ENCODE measurements at regions of chr11 and their contacts with region 1.

Region 1: DNA sequence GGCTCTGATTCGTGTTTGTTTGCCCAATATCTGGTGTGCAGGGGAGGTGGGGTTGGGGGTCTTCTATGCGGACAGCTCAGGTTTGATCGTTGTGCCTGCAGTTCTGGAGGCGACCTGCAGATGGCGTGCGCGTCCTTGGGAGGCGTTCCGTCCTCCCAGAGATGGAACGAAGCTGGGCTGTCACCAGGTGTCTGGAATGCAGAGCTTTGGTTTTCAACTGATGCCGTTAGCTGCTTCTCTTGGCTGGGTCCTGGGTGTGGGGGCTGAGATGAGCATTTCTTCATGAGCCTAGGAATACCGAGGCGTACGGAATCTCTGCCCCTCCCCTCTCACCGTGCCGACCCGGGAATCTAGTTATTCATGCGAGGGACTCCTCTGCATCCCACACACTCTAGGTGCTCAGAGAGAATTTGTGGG is 98.6 kb downstream of the CEP164 start:
- DNase-seq: no peak
- ATAC-seq: peak; percentile 83
- H3K4me3 ChIP-seq: no peak overlapping the region
- H3K27ac ChIP-seq: no peak overlapping the region
- H3K4me1 ChIP-seq: no peaks in the 10 kb centered on the region
- H3K27me3 ChIP-seq: no peaks in the 10 kb centered on the region
- CTCF ChIP-seq: peak; percentile 96 to 100 (median 98)
- EP300 ChIP-seq: no peak
- POLR2A ChIP-seq: no peak
- RAD21 ChIP-seq: peak; percentile 95

Region 2: GRCh38 chr11:117369534-117369933 is 56.7 kb before region 1 on chr11:
- CTCF ChIA-PET with region 1: no interaction called
- POLR2A ChIA-PET with region 1: no interaction called
- RAD21 ChIA-PET with region 1: no interaction called
- SMC1A ChIA-PET with region 1: no interaction called
- in situ Hi-C with region 1: no loop called
- intact Hi-C with region 1: no loop called
- DNase-seq: no peak
- ATAC-seq: no peak
- H3K4me3 ChIP-seq: no peak overlapping the region
- H3K27ac ChIP-seq: no peak overlapping the region
- H3K4me1 ChIP-seq: no peaks in the 10 kb centered on the region
- H3K27me3 ChIP-seq: no peaks in the 10 kb centered on the region
- CTCF ChIP-seq: no peak
- EP300 ChIP-seq: no peak
- POLR2A ChIP-seq: no peak
- RAD21 ChIP-seq: no peak

Region 3: DNA sequence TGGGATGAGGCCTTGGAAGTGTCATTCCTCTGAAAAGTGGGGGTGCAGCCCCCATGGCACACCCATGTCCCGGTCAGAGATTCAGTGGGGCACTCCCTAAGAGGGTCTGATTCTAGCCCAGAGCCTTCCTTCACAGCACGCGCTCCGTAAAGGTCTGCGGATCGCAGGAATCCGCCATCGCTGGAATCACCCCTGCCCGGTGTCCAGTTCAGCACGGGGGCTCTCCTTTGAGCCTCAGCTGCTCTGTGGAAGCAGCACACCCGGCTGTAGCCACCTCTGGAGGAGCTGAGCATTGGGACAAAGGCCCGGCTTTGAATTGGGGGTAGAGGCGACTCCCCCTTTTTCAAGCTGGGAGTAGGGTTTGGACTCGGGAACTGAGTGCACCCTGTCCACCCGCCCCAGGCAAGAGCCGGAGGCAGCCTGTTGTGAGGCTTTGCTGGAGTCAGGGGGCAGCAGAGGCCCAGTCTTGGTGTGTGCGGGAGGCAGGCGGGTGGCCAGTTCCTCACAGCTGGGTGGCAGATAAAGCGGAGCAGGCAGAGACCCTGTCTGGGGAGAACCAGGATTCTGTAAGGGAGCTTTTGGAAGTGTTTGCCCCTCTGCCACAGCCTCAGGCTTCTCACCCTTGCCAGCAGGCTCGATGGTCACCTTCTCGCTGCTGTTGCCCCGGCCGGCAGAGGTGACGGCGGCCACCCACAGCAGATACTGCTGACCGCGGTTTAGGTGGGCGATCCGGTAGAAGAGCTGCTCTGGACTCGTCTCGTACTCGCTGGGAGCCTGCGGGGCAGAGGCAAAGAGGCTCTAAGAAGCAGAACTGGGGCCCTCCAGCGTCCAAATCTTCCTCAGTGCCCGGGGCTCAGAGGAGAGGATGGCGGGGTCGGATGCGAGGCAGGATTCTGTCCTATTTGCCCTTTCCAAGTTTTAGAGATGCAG is 17.3 kb after region 1 on chr11:
- CTCF ChIA-PET with region 1: interaction called, 24 read pairs
- POLR2A ChIA-PET with region 1: no interaction called
- RAD21 ChIA-PET with region 1: interaction called, 6 read pairs
- SMC1A ChIA-PET with region 1: interaction called, 4 read pairs
- in situ Hi-C with region 1: no loop called
- intact Hi-C with region 1: no loop called
- DNase-seq: no peak
- ATAC-seq: peak; percentile 91
- H3K4me3 ChIP-seq: no peak overlapping the region
- H3K27ac ChIP-seq: no peak overlapping the region
- H3K4me1 ChIP-seq: no peaks in the 10 kb centered on the region
- H3K27me3 ChIP-seq: no peaks in the 10 kb centered on the region; a peak in 1 of 4 replicates
- CTCF ChIP-seq: peak; percentile 35 to 76 (median 58); a peak in 4 of 6 replicates
- EP300 ChIP-seq: no peak
- POLR2A ChIP-seq: no peak
- RAD21 ChIP-seq: peak; percentile 83

Region 4: GRCh38 chr11:117479372-117479771 is 53.1 kb after region 1 on chr11:
- CTCF ChIA-PET with region 1: interaction called, 65 read pairs
- POLR2A ChIA-PET with region 1: no interaction called
- RAD21 ChIA-PET with region 1: interaction called, 23 read pairs
- SMC1A ChIA-PET with region 1: interaction called, 15 read pairs
- in situ Hi-C with region 1: no loop called
- intact Hi-C with region 1: loop called (anchors 2 kb)
- DNase-seq: no peak
- ATAC-seq: peak; percentile 75
- H3K4me3 ChIP-seq: no peak overlapping the region
- H3K27ac ChIP-seq: no peak overlapping the region
- H3K4me1 ChIP-seq: no peaks in the 10 kb centered on the region
- H3K27me3 ChIP-seq: no peaks in the 10 kb centered on the region; a peak in 1 of 4 replicates
- CTCF ChIP-seq: peak; percentile 31 to 54 (median 42)
- EP300 ChIP-seq: no peak
- POLR2A ChIP-seq: no peak
- RAD21 ChIP-seq: peak; percentile 65

Region 5: GRCh38 chr11:117511931-117512539 is 85.8 kb after region 1 on chr11:
- CTCF ChIA-PET with region 1: interaction called, 24 read pairs
- POLR2A ChIA-PET with region 1: no interaction called
- RAD21 ChIA-PET with region 1: interaction called, 12 read pairs
- SMC1A ChIA-PET with region 1: interaction called, 14 read pairs
- in situ Hi-C with region 1: no loop called
- intact Hi-C with region 1: no loop called
- DNase-seq: no peak
- ATAC-seq: no peak
- H3K4me3 ChIP-seq: no peak overlapping the region
- H3K27ac ChIP-seq: no peak overlapping the region
- H3K4me1 ChIP-seq: no peaks in the 10 kb centered on the region
- H3K27me3 ChIP-seq: peaks cover 0 to 1% of the 10 kb centered on the region in 2 experiments; a peak in 1 of 4 replicates
- CTCF ChIP-seq: no peak
- EP300 ChIP-seq: no peak
- POLR2A ChIP-seq: no peak
- RAD21 ChIP-seq: no peak

Region 6: GRCh38 chr11:117610045-117610444 is 183.8 kb after region 1 on chr11:
- CTCF ChIA-PET with region 1: interaction called, 156 read pairs
- POLR2A ChIA-PET with region 1: no interaction called
- RAD21 ChIA-PET with region 1: interaction called, 6 read pairs
- SMC1A ChIA-PET with region 1: interaction called, 3 read pairs
- in situ Hi-C with region 1: no loop called
- intact Hi-C with region 1: no loop called
- DNase-seq: peak; percentile 70
- ATAC-seq: peak; percentile 47
- H3K4me3 ChIP-seq: peak overlapping the region; percentile 28; the same call in 1 of the 2 replicates
- H3K27ac ChIP-seq: peak overlapping the region; percentile 17; the same call in 1 of the 2 replicates
- H3K4me1 ChIP-seq: peaks cover 37% of the 10 kb centered on the region
- H3K27me3 ChIP-seq: no peaks in the 10 kb centered on the region
- CTCF ChIP-seq: 0 out of 6 replicates have a peak, but pooled peaks of 1 of the 3 experiments have one; percentile 2
- EP300 ChIP-seq: peak in 1 of 2 experiments; percentile 71; a peak in 1 of 4 replicates
- POLR2A ChIP-seq: no peak
- RAD21 ChIP-seq: no peak

Region 7: DNA sequence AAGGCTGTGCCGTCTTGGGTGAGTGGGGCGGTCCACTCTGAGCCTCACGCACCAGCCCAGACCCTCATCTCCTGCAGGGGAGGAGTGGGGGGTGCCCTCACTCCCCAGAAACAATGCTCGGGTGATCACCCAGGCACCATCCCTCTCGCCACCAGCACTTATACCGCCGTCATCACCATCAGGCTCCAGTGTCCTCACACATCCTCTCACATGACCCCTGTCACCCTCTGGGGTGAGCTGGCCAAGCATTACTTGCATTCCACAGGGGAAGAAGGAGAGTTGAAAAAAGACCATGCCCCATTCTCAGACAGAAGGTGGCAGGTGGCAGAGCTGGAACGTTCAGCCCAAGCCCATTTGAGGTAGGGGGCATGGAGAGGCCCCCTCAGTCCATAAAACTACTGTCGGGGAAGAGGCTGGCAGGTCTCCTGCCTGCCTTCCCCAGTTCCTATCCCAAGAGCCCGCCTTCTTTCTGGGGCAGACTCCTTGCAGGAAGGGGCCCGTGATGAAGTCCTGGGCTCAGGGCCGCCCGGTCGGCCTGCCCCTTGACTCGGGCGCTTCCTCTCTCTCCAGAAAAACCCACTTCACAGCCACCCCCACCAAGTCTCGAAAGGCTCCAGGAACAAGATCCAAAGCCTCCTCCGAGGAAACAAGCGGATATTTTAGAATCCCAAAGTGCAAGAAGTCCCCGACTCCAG is 217.5 kb after region 1 on chr11:
- CTCF ChIA-PET with region 1: interaction called, 22 read pairs
- POLR2A ChIA-PET with region 1: no interaction called
- RAD21 ChIA-PET with region 1: no interaction called
- SMC1A ChIA-PET with region 1: interaction called, 4 read pairs
- in situ Hi-C with region 1: no loop called
- intact Hi-C with region 1: no loop called
- DNase-seq: no peak
- ATAC-seq: no peak
- H3K4me3 ChIP-seq: no peak overlapping the region
- H3K27ac ChIP-seq: no peak overlapping the region
- H3K4me1 ChIP-seq: no peaks in the 10 kb centered on the region
- H3K27me3 ChIP-seq: peaks cover 3 to 4% of the 10 kb centered on the region in 2 experiments; a peak in 2 of 4 replicates
- CTCF ChIP-seq: no peak
- EP300 ChIP-seq: no peak
- POLR2A ChIP-seq: no peak
- RAD21 ChIP-seq: no peak

Region 8: GRCh38 chr11:117817368-117818040 is 391.2 kb after region 1 on chr11:
- CTCF ChIA-PET with region 1: interaction called, 83 read pairs
- POLR2A ChIA-PET with region 1: interaction called, 6 read pairs
- RAD21 ChIA-PET with region 1: interaction called, 75 read pairs
- SMC1A ChIA-PET with region 1: interaction called, 36 read pairs
- in situ Hi-C with region 1: no loop called
- intact Hi-C with region 1: no loop called
- DNase-seq: peak; percentile 93
- ATAC-seq: peak; percentile 47
- H3K4me3 ChIP-seq: no peak overlapping the region
- H3K27ac ChIP-seq: peak overlapping the region; percentile 87
- H3K4me1 ChIP-seq: peaks cover 55% of the 10 kb centered on the region
- H3K27me3 ChIP-seq: no peaks in the 10 kb centered on the region
- CTCF ChIP-seq: peak; percentile 98 to 100 (median 99)
- EP300 ChIP-seq: no peak; a peak in 1 of 4 replicates
- POLR2A ChIP-seq: peak; percentile 4; the same call in 1 of the 2 replicates
- RAD21 ChIP-seq: peak; percentile 95

Region 9: DNA sequence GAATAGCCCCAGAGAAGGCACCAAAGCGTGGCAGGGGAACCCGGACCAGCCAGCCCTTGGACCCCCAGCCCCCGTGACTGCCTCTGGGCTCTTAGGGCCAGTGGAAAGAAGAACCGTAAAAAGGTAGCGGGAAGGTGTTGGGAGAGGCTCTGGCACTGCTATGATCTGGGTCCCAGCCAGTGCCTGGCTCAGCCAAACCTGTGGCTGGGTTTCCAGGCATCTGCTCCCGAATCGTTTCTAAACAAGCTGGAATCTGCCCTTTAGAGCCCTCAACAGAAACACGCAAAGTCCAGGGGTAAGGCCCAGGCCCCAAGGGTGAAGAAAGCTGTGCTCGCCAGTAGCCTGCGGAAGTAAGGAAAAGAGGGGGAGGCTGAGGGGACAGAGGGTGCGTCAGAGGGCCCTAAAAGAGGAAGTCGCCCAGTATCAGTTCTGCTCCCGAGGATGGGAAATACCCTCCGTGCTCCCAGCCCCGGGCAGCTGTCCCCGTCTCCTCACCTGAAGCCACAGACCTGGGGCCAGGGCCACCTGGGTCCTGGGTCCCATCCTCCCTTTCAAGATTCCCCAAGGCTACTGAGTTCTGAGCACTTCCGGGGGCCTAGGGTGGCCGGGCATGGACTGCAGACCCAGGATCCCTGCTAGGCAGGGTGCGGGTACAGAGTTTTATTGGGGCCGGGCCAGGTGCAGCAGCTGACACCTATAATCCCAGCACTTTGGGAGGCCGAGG is 584.6 kb after region 1 on chr11:
- CTCF ChIA-PET with region 1: no interaction called
- POLR2A ChIA-PET with region 1: no interaction called
- RAD21 ChIA-PET with region 1: no interaction called
- SMC1A ChIA-PET with region 1: no interaction called
- in situ Hi-C with region 1: no loop called
- intact Hi-C with region 1: no loop called
- DNase-seq: peak; percentile 86
- ATAC-seq: peak; percentile 85
- H3K4me3 ChIP-seq: no peak overlapping the region
- H3K27ac ChIP-seq: peak overlapping the region; percentile 97
- H3K4me1 ChIP-seq: peaks cover 80% of the 10 kb centered on the region
- H3K27me3 ChIP-seq: no peaks in the 10 kb centered on the region
- CTCF ChIP-seq: no peak
- EP300 ChIP-seq: peak; percentile 100
- POLR2A ChIP-seq: no peak
- RAD21 ChIP-seq: 0 out of 2 replicates have a peak, but pooled peaks have one; percentile 15

Measured in GM12878 (cell line).